Vagina (tissue), 2 donors: ENCODE measurements at regions of chr16 and their contacts with region 1.

Region 1: GRCh38 chr16:20849587-20850390 is 43.5 kb downstream of the REXO5 start:
- DNase-seq: no peak
- H3K4me3 ChIP-seq: no peak overlapping the region
- H3K27ac ChIP-seq: peak overlapping the region; percentile 82
- H3K4me1 ChIP-seq: peaks cover 40% of the 10 kb centered on the region
- H3K27me3 ChIP-seq: no peaks in the 10 kb centered on the region
- CTCF ChIP-seq: peak; percentile 87 to 98 (median 91)
- POLR2A ChIP-seq: no peak

Region 2: GRCh38 chr16:21083729-21084268 is 234.0 kb after region 1 on chr16:
- intact Hi-C with region 1: loop called (anchors 5 kb)
- DNase-seq: no peak
- H3K4me3 ChIP-seq: no peak overlapping the region
- H3K27ac ChIP-seq: no peak overlapping the region
- H3K4me1 ChIP-seq: no peaks in the 10 kb centered on the region
- H3K27me3 ChIP-seq: no peaks in the 10 kb centered on the region
- CTCF ChIP-seq: peak; percentile 61 to 70 (median 69)
- POLR2A ChIP-seq: no peak